Lower leg skin (tissue), 4 donors: ENCODE measurements at regions of chr13 and their contacts with region 1.

Region 1: DNA sequence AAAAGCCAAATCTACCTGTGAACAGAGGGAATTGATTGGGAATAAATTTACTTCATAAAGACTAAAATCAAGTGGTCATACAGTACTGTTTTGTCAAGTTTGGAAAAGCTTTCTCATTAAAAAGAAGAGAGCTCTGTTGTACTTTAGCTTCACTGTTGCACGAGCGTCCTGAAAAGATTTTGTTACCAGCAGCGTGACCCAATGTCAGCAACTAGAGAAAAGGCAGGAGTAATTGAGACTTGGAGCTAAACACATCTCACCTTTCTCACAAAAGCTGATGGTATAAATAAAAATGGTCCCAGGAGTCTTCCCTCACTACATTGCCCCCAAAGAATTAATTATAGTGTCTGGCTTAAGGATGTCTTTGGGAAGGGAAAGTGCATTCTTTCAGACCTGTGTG is 613.7 kb downstream of the OLFM4 start:
- DNase-seq: no peak
- H3K4me3 ChIP-seq: no peak overlapping the region
- CTCF ChIP-seq: no peak
- POLR2A ChIP-seq: no peak

Region 2: DNA sequence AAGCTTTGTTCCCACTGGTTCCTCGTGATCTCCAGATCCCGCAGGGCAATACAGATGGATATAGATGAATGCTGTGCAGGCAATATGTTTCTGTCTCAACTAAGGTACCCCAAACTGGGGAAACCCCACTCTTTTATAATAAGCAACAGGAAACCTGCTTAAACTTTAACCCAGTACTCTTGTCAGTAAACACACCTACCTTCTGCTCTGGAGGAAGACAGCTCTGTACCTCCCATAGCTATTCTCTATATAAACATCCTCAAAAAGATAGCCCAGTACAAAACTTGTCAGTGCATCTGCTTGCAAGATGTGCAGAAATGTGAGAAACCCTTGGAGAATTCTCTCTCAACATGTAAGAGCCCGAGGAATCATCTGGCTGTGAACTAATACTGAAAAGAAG is 30.1 kb before region 1 on chr13:
- intact Hi-C with region 1: loop called (anchors 1 kb)
- DNase-seq: no peak
- H3K4me3 ChIP-seq: no peak overlapping the region
- CTCF ChIP-seq: no peak
- POLR2A ChIP-seq: no peak

Region 3: DNA sequence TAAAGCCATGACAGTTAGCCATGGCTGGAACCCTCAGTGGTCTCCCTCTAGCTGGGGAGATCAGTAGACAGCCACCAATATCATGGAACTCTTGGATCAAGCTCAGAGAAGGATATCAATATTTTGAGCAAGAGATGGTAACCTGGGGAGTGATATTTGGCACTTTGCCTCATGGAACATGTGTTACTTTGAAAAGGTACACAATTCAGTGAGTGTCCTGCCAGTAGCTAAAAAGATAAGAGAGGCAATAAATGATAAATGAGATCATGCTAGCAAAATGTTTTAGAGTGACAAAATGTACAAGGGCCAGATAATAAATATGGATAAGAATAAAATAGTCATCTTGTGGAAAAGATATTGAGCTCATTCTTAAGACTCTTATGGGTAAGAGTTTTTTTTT is 1005.0 kb after region 1 on chr13:
- intact Hi-C with region 1: no loop called
- DNase-seq: no peak
- H3K4me3 ChIP-seq: no peak overlapping the region
- CTCF ChIP-seq: no peak
- POLR2A ChIP-seq: no peak

Region 4: DNA sequence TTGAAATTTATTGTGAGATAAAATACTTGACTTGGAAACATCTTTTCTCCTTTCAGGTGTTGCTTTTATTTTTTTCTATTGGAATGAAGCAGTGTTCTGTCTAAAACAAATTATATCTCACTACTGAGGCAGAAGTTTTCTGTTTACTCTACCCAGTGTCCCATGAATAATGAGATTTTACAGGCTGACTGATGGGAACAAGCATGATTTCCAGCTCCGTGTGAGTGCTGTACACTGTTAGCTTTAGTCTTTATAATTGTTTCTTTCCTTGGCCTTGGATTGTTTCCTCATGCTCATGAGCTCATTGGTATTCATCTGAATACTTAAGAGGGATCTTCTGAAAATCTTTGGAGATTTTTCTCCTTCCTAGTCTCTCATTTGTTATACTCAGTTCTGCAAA is 1448.9 kb after region 1 on chr13:
- intact Hi-C with region 1: no loop called
- DNase-seq: no peak
- H3K4me3 ChIP-seq: no peak overlapping the region
- CTCF ChIP-seq: no peak
- POLR2A ChIP-seq: no peak